ENCODE measurements at regions of chr10 and their contacts with region 1.

Region 1: GRCh38 chr10:14583252-14583651 is 191.4 kb downstream of the FAM107B start:
- DNase-seq: peak; percentile 93
- H3K4me3 Mint-ChIP-seq: peak overlapping the region; percentile 80
- H3K27ac Mint-ChIP-seq: peak overlapping the region; percentile 92
- H3K4me1 Mint-ChIP-seq: peaks cover 68% of the 10 kb centered on the region
- H3K27me3 Mint-ChIP-seq: no peaks in the 10 kb centered on the region

Region 2: DNA sequence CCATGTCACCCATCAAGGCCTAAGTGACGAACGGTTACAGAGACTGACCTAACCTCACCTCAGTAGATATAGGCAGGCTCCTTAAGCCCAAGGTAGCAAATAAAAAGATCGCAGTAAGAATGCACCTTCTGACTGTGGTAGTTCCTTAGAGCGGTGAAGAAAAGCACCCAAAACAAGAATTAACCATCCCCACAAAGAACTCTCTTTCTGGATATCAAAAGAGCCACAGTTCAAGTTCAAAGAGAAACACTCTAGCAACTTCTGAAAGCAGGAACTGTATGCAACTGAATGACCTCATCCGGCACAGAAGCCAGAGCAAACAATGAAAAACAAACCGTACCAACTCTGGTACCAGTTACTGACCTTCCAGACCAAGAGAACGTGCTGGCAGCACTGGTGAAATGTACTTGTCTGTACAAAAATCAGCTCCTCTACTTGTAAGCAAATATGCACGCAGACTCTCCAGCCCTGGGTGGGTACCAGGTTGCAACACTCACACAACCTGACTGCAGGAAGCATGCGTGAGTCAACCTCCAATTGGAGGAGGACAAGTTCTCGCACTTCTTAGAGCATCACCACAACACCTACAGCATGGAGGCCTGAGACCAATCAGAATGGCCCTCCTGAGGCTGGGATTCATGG is 11.3 kb before region 1 on chr10:
- intact Hi-C with region 1: loop called (anchors 1 kb)
- DNase-seq: peak; percentile 89
- H3K4me3 Mint-ChIP-seq: peak overlapping the region; percentile 81
- H3K27ac Mint-ChIP-seq: peak overlapping the region; percentile 93
- H3K4me1 Mint-ChIP-seq: peaks cover 77% of the 10 kb centered on the region
- H3K27me3 Mint-ChIP-seq: no peaks in the 10 kb centered on the region

Region 3: GRCh38 chr10:14705548-14706230 is 122.4 kb after region 1 on chr10:
- intact Hi-C with region 1: no loop called
- DNase-seq: no peak
- H3K4me3 Mint-ChIP-seq: no peak overlapping the region
- H3K27ac Mint-ChIP-seq: no peak overlapping the region
- H3K4me1 Mint-ChIP-seq: peaks cover 4% of the 10 kb centered on the region
- H3K27me3 Mint-ChIP-seq: no peaks in the 10 kb centered on the region

Measured in activated CD4-positive, alpha-beta T cell treated with anti-CD3 and anti-CD28 coated beads, Interleukin-2, amount 10 ng/mL, durations not matched to agents 24 days and 14 days (primary cell).